ENCODE measurements at regions of chr15 and their contacts with region 1.

Region 1: DNA sequence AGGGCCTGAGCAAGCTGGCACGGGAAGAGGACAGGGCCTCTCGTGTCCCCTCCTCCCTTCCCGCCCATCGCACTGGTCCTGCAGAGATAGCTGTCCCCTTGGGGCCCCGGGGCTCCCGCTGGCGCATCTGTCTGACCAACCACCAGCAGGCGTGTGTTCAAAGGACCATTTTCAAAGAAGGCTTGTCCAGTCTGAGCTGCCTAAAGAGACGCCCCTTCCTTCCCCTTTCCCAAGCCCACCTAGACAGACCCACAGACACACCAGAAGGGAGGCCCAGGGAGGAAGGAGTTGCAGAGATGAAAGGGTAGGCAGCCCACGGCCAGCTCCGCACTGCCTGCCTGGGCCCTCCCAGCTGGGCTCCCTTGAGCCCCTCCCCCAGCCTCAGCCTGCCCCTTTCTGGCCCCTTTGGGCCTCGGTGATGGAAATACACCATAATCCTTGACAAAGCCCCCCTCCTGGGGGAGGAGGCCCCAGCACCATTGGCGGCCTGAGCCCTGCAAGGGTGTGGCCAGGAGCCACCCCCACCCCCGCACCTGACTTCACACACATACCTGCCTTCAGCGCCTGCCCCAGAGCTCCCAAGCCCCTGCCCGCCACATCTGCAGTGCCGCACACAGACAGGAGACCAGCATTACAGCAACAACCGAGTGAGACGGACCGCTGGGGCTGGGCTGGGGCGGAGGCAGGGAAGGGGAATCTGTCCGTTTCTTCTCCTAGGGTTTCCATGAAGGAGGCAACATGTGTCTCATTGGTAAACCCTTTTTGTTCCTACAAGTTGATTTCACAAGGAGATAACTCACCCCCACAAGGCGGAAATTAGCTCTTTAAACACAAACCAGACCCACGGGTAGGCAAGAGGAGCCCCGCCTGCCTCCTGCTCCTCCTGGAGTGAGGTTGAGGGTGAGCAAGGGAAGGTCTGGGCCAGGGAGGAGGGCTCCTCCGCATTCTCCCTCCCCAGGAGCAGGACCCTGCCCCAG is at the start of gene STRA6:
- DNase-seq: peak; percentile 77
- H3K4me3 Mint-ChIP-seq: peak within 1 kb of the TSS; percentile 56
- H3K27ac Mint-ChIP-seq: peak within 1 kb of the TSS; percentile 93
- H3K4me1 Mint-ChIP-seq: peaks cover 58% of the 10 kb centered on the region
- H3K27me3 Mint-ChIP-seq: no peaks in the 10 kb centered on the region
- CTCF ChIP-seq: no peak
- total RNA-seq, gene STRA6: 5.9 and 8.4 TPM in 2 replicates

Region 2: GRCh38 chr15:74011610-74012009 is 191.1 kb before region 1 on chr15:
- CTCF ChIA-PET with region 1: no interaction called
- intact Hi-C with region 1: no loop called
- DNase-seq: no peak
- H3K4me3 Mint-ChIP-seq: peak overlapping the region; percentile 32
- H3K27ac Mint-ChIP-seq: peak overlapping the region; percentile 56
- H3K4me1 Mint-ChIP-seq: peaks cover 54% of the 10 kb centered on the region
- H3K27me3 Mint-ChIP-seq: no peaks in the 10 kb centered on the region
- CTCF ChIP-seq: no peak

Region 3: DNA sequence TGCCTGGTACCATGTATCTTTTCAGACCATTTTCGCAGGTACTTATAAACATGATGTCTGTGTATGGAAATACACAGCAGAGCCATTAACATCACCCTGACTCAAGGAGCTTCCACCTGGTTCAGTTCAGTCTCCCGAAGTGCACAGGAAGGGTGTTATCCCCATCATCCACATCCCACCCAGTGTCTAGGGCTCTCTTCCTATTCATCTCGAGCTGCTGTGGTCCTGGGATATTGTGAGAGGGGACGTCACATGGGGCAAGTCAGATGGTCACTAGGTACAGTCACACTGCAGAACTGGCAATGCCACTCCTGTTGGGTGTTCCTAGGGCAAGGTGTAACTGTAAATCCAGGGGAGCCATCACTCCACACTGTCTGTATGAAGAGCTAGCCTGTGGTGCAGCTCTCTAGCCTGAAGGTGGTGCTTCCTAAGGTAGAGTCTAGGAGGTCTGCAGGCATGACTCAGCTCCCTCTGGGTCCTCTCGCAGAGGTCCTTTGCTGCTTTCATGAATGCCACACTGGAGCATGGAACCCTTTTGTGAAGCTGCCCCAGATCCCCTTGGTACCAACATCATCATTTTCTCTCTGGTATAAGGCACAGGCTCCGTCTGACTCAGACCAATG is 58.5 kb before region 1 on chr15:
- CTCF ChIA-PET with region 1: no interaction called
- intact Hi-C with region 1: loop called (anchors 5 kb)
- DNase-seq: peak; percentile 38
- H3K4me3 Mint-ChIP-seq: no peak overlapping the region
- H3K27ac Mint-ChIP-seq: no peak overlapping the region
- H3K4me1 Mint-ChIP-seq: no peaks in the 10 kb centered on the region
- H3K27me3 Mint-ChIP-seq: peaks cover 23% of the 10 kb centered on the region
- CTCF ChIP-seq: peak; percentile 33

Region 4: DNA sequence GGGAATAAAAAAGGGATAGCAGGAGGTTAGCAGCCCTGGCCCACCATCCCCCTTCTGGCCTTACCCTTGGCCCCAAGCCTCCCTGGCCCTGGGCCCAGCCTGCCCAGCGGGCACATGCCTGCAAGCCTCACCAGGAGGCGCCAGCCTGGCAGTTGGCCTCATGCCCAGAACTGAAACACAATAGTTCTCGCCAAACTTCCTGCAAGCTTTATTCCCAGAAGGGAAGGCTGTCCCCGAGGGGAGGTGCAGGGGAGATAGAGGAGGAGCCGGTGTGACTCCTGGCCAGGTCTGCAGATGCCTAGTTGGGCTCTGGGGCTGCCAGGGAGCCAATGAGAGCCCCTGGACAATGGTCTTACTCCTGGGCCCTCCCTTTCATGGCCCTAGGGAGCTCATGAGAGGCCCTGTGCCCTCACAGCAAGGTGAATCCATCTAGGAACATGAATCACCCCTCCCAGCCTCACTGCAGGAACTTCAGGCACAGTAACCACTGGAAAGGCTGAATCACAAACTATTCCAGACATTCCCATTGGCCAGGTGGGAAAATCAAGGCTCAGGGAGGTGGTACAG is 37.3 kb after region 1 on chr15:
- CTCF ChIA-PET with region 1: interaction called, 12 read pairs
- intact Hi-C with region 1: loop called (anchors 5 kb)
- DNase-seq: peak; percentile 97
- H3K4me3 Mint-ChIP-seq: no peak overlapping the region
- H3K27ac Mint-ChIP-seq: peak overlapping the region; percentile 57
- H3K4me1 Mint-ChIP-seq: peaks cover 76% of the 10 kb centered on the region
- H3K27me3 Mint-ChIP-seq: no peaks in the 10 kb centered on the region
- CTCF ChIP-seq: peak; percentile 66

Region 5: DNA sequence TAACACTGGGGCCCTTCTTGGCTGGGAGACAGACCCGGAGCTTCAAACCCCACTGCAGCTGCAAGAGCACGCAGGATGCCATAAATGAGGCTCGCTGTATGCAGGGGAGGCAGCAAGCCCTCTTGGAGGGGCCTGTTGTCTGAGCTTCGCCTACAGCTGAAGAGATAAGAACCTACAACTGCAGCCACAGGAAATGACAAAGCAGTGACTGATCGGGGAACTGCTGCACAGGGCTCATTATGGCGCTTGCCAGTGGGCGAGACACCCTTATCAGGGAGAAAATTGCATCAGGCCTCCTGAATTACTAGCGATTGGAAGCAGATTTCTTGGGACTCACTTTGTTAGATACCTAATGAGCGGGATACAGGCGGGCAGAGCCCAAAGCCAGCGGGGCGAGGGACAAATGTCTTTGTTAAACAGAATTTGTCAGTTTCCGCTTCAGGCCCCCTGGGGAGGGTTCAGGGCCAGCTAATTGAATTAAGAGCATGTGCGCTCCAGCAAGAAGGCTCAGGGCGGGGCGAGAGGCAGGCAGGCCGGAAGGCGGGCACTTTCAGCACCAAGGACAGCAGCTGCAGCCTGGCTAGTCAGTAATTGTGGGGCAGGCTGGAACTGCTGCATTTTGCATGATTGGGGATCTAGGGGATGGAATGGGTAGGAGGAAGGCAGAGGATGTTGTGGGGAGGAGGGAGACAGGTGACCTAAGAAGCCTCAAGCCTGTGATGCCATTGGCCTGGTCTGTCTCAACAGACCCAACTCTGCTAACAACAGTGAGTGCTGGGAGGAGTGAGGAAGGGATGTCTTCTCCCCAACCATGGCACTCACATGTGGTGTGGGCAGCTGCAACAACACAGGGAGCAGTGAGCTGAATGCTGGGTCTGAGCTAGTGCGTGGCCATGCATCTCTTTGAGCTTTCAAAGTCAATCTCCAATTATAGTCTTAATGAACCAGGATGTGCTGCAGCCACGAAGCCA is 88.6 kb after region 1 on chr15:
- CTCF ChIA-PET with region 1: interaction called, 3 read pairs
- intact Hi-C with region 1: loop called (anchors 5 kb)
- DNase-seq: peak; percentile 89
- H3K4me3 Mint-ChIP-seq: no peak overlapping the region
- H3K27ac Mint-ChIP-seq: no peak overlapping the region
- H3K4me1 Mint-ChIP-seq: no peaks in the 10 kb centered on the region
- H3K27me3 Mint-ChIP-seq: peaks cover 92% of the 10 kb centered on the region
- CTCF ChIP-seq: no peak

Region 6: DNA sequence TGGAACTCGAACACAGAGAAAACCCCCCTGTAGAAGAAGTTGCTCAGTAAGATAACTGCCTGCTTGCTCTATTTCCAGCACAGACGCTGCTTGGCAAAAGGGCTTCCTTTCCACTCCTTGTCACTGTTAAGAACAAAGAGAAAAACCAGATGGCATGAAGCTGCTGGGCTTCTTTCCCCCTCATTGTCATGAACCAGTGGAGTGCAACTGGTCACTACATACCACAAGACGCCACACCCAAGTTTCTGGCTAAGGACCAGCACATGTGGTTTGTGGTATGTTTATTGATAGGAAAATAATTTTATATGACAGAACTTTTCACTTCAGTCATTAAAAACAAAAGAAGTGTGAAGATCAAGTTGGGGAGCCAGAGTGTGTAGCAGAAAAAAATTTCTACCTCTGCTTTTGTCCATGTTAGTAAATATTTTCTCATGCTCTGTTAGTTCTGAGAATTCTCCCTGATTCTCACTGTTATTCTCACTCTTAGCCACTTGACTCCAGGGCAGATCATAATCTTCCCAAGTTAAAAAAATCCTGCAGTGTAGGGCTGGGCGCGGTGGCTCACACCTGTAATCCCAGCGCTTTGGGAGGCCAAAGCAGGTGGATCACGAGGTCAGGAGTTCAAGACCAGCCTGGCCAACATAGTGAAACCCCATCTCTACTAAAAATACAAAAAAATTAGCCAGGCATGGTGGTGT is 450.8 kb after region 1 on chr15:
- CTCF ChIA-PET with region 1: no interaction called
- intact Hi-C with region 1: loop called (anchors 5 kb)
- DNase-seq: peak; percentile 68
- H3K4me3 Mint-ChIP-seq: peak overlapping the region; percentile 15
- H3K27ac Mint-ChIP-seq: peak overlapping the region; percentile 57
- H3K4me1 Mint-ChIP-seq: peaks cover 67% of the 10 kb centered on the region
- H3K27me3 Mint-ChIP-seq: no peaks in the 10 kb centered on the region
- CTCF ChIP-seq: no peak

Region 7: GRCh38 chr15:75090388-75090734 is 887.6 kb after region 1 on chr15:
- CTCF ChIA-PET with region 1: no interaction called
- intact Hi-C with region 1: no loop called
- DNase-seq: no peak
- H3K4me3 Mint-ChIP-seq: no peak overlapping the region
- H3K27ac Mint-ChIP-seq: no peak overlapping the region
- H3K4me1 Mint-ChIP-seq: peaks cover 11% of the 10 kb centered on the region
- H3K27me3 Mint-ChIP-seq: no peaks in the 10 kb centered on the region
- CTCF ChIP-seq: no peak

Measured in Calu3 (cell line).